HCT116 (cell line): ENCODE measurements at regions of chr12 and their contacts with region 1.

Region 1: DNA sequence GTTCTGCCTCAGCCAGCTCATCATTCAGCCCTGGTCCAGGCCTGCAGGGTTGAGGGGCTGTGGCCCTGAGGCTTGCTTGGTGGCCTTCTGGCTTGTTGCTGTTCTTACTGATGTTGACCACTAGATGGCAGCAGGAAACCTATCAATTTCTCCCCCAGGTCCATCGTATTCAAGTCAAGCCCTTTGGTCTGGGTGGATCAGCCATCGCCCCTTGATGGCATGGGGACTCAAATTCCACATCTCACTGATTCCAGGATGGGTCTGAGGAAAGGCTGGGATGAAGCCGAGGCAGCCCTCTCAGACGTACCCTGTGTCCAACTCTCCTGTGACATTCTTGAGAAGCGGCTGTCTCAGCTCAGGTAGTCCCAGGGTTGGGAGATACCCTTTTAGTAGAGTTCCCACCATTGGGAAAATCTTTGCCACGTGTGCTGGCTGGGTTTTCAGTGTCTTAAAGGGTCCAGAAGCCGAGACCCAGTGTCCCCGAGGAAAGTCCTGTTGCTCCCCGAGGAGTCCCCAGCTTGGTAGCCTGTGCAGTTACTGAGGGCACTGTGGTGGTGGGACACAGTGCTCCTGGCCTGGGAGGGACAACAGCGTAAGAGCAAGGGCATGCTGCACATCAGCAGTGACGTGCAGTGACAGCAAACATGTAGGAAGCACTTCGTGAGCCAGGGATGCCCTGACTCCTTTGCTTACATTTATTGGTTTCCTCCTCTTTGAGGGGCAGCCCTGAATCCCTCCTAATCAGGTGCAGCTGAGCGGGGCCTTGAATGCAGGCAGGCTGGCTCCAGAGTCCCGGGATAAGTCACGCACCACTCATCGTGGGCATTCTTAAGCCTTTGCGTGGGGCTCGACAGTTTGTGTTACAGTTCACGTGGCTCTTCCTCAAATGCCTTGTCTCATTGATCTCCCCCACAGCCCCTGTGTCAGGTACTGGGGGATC is 58.6 kb downstream of the TSPAN9 start:
- DNase-seq: peak; percentile 61
- ATAC-seq: peak; percentile 89
- H3K4me3 ChIP-seq: no peak overlapping the region
- H3K27ac ChIP-seq: no peak overlapping the region
- H3K4me1 ChIP-seq: peaks cover 4 to 6% of the 10 kb centered on the region in 2 experiments; a peak in 2 of 4 replicates
- H3K27me3 ChIP-seq: no peaks in the 10 kb centered on the region
- CTCF ChIP-seq: peak; percentile 69 to 81 (median 72); a peak in 5 of 6 replicates
- POLR2A ChIP-seq: no peak
- RAD21 ChIP-seq: peak; percentile 90

Region 2: DNA sequence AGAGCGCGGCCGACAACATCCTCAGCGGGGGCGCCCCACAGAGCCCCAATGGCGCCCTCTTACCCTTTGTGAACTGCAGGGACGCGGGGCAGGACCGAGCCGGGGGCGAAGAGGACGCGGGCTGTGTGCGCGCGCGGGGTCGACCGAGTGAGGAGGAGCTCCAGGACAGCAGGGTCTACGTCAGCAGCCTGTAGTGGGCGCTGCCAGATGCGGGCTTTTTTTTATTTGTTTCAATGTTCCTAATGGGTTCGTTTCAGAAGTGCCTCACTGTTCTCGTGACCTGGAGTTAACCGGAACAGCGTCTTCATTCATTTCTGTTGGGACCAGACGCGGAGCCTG is 444.8 kb before region 1 on chr12:
- CTCF ChIA-PET with region 1: no interaction called
- POLR2A ChIA-PET with region 1: no interaction called
- RAD21 ChIA-PET with region 1: no interaction called
- intact Hi-C with region 1: no loop called
- DNase-seq: no peak
- ATAC-seq: no peak
- H3K4me3 ChIP-seq: no peak overlapping the region
- H3K27ac ChIP-seq: no peak overlapping the region
- H3K4me1 ChIP-seq: peaks cover 0 to 19% of the 10 kb centered on the region in 2 experiments; a peak in 3 of 4 replicates
- H3K27me3 ChIP-seq: peaks cover 9% of the 10 kb centered on the region; the same call in 1 of the 2 replicates
- CTCF ChIP-seq: no peak
- POLR2A ChIP-seq: no peak
- RAD21 ChIP-seq: no peak

Region 3: GRCh38 chr12:2722806-2723205 is 413.0 kb before region 1 on chr12:
- CTCF ChIA-PET with region 1: no interaction called
- POLR2A ChIA-PET with region 1: no interaction called
- RAD21 ChIA-PET with region 1: no interaction called
- intact Hi-C with region 1: no loop called
- DNase-seq: no peak
- ATAC-seq: no peak
- H3K4me3 ChIP-seq: no peak overlapping the region
- H3K27ac ChIP-seq: no peak overlapping the region
- H3K4me1 ChIP-seq: no peaks in the 10 kb centered on the region
- H3K27me3 ChIP-seq: peaks cover 66% of the 10 kb centered on the region
- CTCF ChIP-seq: no peak
- POLR2A ChIP-seq: no peak
- RAD21 ChIP-seq: no peak

Region 4: DNA sequence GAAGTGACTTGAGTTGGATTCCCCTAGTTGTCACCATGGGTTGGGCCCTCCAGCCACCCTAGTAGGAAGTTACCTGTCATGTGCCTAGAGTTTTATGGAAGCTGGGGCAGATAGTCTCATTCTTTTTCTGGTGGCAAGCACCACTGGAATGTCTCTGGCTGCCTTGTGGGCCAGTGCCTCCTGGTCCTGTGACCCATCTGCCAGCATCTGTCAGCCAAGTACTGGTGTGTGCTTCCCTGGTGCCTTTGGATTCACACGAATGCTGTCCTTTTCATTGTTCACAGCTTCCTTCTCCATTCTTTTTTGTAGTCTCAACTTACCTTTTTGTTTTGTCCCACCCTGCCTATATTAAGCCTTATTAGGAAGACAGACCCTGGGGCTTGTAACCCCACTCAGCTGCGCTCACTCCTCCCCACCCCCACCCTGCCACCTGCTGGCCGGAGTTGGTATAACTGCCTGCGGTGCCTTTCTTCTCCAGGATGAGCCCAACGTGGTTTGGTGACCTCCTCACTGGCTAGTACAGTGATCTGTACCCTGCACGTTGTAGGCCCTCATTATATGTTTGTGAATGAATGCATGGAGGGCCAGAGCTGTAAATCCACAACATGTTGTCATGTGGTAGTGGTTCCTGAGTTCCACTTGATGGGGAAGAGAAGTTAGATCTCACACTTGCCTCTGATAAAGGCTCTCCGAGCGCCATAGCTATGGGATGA is 67.1 kb after region 1 on chr12:
- CTCF ChIA-PET with region 1: interaction called, 3 read pairs
- POLR2A ChIA-PET with region 1: no interaction called
- RAD21 ChIA-PET with region 1: no interaction called
- intact Hi-C with region 1: loop called (anchors 1 kb)
- DNase-seq: no peak
- ATAC-seq: peak; percentile 67
- H3K4me3 ChIP-seq: no peak overlapping the region
- H3K27ac ChIP-seq: no peak overlapping the region
- H3K4me1 ChIP-seq: peaks cover 0 to 16% of the 10 kb centered on the region in 2 experiments; a peak in 2 of 4 replicates
- H3K27me3 ChIP-seq: no peaks in the 10 kb centered on the region
- CTCF ChIP-seq: peak; percentile 65 to 99 (median 95); a peak in 5 of 6 replicates
- POLR2A ChIP-seq: no peak
- RAD21 ChIP-seq: peak; percentile 61

Region 5: DNA sequence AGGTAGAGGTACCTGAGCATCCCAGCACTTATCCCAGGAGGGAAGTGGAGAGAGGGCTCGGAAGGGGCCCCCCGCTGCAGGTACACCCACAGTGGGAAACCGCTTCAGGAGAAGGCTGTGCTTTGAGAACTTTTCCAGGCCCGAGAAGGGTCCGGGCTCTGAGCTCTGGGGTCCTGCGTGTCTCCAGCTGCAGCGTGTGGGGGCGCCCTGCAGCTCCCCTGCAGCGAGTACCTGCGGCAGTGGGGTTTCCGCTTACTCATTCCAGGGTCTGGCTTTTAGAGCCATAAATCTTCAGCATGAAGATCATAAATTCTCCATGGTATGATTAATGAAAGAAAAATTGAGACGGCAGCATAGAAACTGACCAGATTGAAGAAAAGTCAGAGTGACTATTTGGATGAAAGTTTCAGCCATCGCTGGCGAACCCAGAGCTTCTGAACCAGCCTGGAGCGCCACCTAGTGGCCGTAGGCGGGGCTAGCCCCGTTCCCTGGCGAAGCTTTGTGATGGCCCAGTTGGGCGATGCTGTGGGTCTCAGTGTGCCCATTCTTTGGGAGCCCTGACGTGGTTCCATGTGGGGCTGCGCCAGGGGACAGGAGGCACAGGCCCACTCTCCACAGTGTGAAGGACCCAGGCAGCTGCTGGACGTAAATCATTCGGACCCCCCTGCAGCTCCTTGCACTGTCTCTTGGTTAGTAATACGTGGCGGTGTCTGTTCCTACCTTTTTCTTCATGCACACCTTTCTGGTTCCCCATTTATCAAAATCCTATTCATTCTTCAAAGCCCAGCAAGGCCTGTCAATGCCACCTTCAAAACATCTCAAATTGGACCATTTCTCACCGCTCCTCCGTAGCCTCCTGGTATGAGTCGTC is 139.6 kb after region 1 on chr12:
- CTCF ChIA-PET with region 1: interaction called, 76 read pairs
- POLR2A ChIA-PET with region 1: interaction called, 3 read pairs
- RAD21 ChIA-PET with region 1: interaction called, 9 to 16 read pairs
- intact Hi-C with region 1: loop called (anchors 1 kb)
- DNase-seq: peak; percentile 24
- ATAC-seq: peak; percentile 82
- H3K4me3 ChIP-seq: no peak overlapping the region
- H3K27ac ChIP-seq: no peak overlapping the region
- H3K4me1 ChIP-seq: peaks cover 7 to 28% of the 10 kb centered on the region in 2 experiments
- H3K27me3 ChIP-seq: no peaks in the 10 kb centered on the region
- CTCF ChIP-seq: peak; percentile 87 to 97 (median 96)
- POLR2A ChIP-seq: no peak
- RAD21 ChIP-seq: peak; percentile 92

Region 6: GRCh38 chr12:3803865-3804472 is 668.2 kb after region 1 on chr12:
- CTCF ChIA-PET with region 1: no interaction called
- POLR2A ChIA-PET with region 1: no interaction called
- RAD21 ChIA-PET with region 1: no interaction called
- intact Hi-C with region 1: loop called (anchors 10 kb)
- DNase-seq: peak; percentile 64
- ATAC-seq: peak; percentile 98
- H3K4me3 ChIP-seq: no peak overlapping the region
- H3K27ac ChIP-seq: no peak overlapping the region
- H3K4me1 ChIP-seq: no peaks in the 10 kb centered on the region
- H3K27me3 ChIP-seq: peaks cover 22% of the 10 kb centered on the region
- CTCF ChIP-seq: peak; percentile 74 to 95 (median 93)
- POLR2A ChIP-seq: no peak
- RAD21 ChIP-seq: peak; percentile 86